ENCODE measurements at regions of chr14 and their contacts with region 1.

Region 1: GRCh38 chr14:101628471-101628966 is 67.2 kb downstream of the DIO3 start:
- DNase-seq: peak; percentile 48 to 96 (median 77)

Region 2: GRCh38 chr14:100383727-100384158 is 1244.8 kb before region 1 on chr14:
- intact Hi-C with region 1: loop called (anchors 1 kb)
- DNase-seq: peak in 9 of 10 donors; percentile 52 to 95 (median 70)

Region 3: DNA sequence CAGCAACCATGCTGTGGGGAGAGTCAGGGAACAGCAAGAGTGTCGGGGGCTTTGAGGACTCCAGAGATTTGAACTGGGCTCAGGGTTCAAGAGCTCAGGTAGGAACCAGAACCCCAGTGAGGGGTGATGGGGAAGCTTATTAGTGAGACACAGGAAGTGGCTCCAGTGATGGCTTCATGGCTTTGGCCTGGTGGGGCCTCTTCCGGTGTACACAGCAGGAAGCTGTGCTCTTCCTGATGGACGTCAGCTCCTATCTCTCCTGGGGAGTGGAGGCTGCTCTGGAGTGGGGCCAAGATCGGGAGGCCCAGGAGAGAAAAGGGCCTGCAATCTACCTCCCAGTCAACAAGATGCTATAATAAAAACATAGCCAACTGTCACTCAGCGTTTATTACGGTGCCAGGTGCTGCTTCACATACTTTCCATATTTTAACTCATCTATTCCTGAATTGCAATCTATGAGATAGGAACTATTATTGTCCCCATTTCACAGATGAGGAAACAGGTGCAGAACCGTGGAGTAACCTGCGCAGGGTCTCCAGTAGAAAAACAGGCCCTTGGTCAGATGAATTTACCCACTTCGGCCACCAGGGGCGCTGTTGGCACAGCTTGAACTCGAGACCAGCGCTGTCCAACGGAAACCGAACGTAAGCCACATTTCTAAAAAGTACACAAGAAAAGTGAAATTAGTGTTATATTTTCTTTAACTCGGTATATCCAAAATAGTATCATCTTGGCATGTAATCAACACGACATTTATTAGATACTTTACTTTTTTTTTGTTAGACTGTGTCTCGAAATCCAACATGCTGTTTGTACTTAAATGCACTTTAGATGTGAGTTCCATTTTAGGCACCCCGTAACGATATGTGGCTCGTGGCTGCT is 965.4 kb before region 1 on chr14:
- intact Hi-C with region 1: loop called (anchors 5 kb)
- DNase-seq: peak; percentile 50 to 94 (median 72)

Region 4: DNA sequence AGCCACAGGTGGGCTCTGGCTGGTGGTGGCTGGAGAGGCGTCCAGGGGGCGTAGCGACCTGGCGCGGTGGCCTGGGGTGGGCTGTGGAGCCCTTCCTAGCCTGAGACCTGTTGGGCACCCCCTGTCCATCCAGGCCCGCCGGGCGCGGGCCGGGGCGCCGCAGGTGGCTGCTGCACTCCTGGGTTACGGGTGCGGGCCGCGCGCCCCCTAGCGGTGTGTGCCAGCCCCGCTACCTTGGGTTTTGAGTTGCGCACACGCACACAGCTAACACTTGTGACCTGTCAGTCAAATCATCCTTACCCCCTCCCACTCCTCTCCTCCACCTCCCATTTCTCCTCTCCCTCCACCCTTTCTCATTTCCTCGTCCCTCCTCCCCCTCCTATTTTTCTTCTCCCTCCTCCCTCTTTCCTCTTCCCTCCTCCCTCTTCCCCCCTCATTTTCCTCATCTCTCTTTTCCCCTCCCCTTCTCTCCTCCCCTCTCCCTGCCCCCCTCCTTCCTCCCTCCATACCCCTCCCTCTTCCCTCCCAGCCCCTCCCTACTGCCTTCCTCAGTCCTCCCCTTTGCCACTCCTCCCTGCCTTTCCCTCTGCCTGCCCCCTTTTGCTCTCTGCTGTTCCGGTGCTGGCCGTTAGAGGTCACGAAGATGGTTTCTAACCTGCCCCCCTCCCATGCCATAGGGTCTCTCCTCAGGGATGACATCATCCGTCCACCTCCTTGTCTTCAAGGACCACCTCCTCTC is 800.3 kb before region 1 on chr14:
- intact Hi-C with region 1: loop called (anchors 10 kb)
- DNase-seq: peak in 7 of 10 donors; percentile 37 to 92 (median 46)

Region 5: GRCh38 chr14:101235335-101236103 is 393.0 kb before region 1 on chr14:
- intact Hi-C with region 1: loop called (anchors 10 kb)
- DNase-seq: peak in 8 of 10 donors; percentile 61 to 93 (median 71)

Region 6: DNA sequence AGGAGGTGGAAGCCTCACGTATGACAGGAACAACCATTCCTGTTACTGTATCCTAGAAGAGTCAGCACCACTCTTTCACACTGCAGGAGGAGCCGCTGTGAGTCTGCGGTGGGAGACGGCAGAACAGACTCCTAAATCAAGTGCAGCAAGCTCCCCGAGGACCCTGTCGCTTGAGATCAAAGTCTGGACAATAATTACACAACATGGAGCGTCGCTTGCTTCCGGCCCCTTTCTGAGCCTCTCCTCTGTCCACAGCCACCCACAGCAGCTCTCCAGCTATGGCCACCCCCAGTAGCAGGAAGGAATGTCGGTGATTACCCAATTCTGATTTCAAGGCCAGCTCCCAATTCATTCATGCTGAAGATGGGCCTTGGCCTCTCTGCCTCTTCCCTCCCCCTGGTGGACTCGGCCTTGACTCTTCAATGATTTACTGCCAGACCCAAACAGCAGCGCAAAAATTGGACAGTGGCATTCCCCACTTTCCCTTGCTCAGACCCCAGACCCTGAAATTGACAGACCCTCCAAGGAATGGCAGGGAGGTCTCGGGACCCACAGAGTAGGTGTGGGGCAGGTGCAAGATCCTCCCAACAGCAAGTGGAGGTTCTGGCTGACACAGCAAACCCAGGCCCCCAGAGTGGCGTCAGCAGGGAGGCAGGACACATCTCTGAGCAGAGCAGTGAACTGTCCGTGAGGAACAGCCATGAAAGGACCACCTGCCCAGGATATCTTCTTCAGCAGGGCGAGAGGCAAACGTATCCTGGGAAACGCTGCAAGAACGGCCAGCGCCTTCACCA is 339.9 kb before region 1 on chr14:
- intact Hi-C with region 1: no loop called
- DNase-seq: no peak

Region 7: GRCh38 chr14:101774006-101774795 is 145.7 kb after region 1 on chr14:
- intact Hi-C with region 1: no loop called
- DNase-seq: peak in 3 of 10 donors; percentile 46 to 88 (median 50)

Measured in posterior cingulate gyrus (tissue), 11 donors.